Naive thymus-derived CD4-positive, alpha-beta T cell (primary cell): ENCODE measurements at regions of chr5 and their contacts with region 1.

Region 1: GRCh38 chr5:172133359-172134029 is 54.5 kb downstream of the STK10 start:
- DNase-seq: peak in 3 of 9 donors; percentile 11 to 32 (median 15)
- ATAC-seq: peak; percentile 87
- H3K4me3 ChIP-seq: no peak overlapping the region
- H3K4me3 Mint-ChIP-seq: peak overlapping the region; percentile 20 to 78 (median 65)
- H3K27ac ChIP-seq: peak overlapping the region; percentile 56
- H3K27ac Mint-ChIP-seq: peak overlapping the region; percentile 67 to 94 (median 85)
- H3K4me1 ChIP-seq: peaks cover 17 to 53% of the 10 kb centered on the region in 2 donors
- H3K4me1 Mint-ChIP-seq: peaks cover 49 to 81% (median 77%) of the 10 kb centered on the region in 7 donors
- H3K27me3 ChIP-seq: no peaks in the 10 kb centered on the region
- H3K27me3 Mint-ChIP-seq: no peaks in the 10 kb centered on the region

Region 2: DNA sequence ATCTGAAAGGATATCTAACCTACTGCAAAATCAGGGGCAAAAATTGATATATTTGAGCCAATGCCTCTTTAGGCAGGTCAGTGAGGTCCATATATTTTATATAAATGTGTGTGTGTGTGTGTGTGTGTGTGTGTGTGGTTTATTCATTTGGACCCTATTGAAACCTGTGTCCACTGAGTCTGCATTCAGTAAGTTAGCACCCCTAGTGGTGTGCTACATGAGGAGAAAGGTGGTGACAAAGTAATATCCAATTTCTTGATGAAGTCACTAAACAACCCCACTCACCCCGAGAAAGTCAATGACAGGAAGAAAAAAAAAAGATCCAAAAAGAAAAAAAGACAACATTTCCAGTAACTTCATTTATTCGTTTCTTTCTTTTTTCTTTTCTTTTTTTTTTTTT is 131.2 kb before region 1 on chr5:
- CTCF ChIA-PET with region 1: no interaction called
- POLR2A ChIA-PET with region 1: no interaction called
- intact Hi-C with region 1: no loop called
- DNase-seq: peak in 3 of 9 donors; percentile 12 to 15 (median 12)
- ATAC-seq: no peak
- H3K4me3 ChIP-seq: no peak overlapping the region
- H3K4me3 Mint-ChIP-seq: peak overlapping the region in 4 of 10 donors; percentile 9 to 47 (median 38)
- H3K27ac ChIP-seq: no peak overlapping the region
- H3K27ac Mint-ChIP-seq: peak overlapping the region in 1 of 9 donors; percentile 19
- H3K4me1 ChIP-seq: peaks cover 31 to 32% of the 10 kb centered on the region in 2 donors
- H3K4me1 Mint-ChIP-seq: peaks cover 48 to 86% (median 73%) of the 10 kb centered on the region in 7 donors
- H3K27me3 ChIP-seq: no peaks in the 10 kb centered on the region
- H3K27me3 Mint-ChIP-seq: no peaks in the 10 kb centered on the region

Region 3: GRCh38 chr5:172065501-172065990 is 67.9 kb before region 1 on chr5:
- CTCF ChIA-PET with region 1: no interaction called
- POLR2A ChIA-PET with region 1: no interaction called
- intact Hi-C with region 1: no loop called
- DNase-seq: no peak
- ATAC-seq: no peak
- H3K4me3 ChIP-seq: no peak overlapping the region
- H3K4me3 Mint-ChIP-seq: peak overlapping the region; percentile 7 to 86 (median 78)
- H3K27ac ChIP-seq: peak overlapping the region; percentile 82
- H3K27ac Mint-ChIP-seq: peak overlapping the region; percentile 87 to 99 (median 96)
- H3K4me1 ChIP-seq: peaks cover 36 to 48% of the 10 kb centered on the region in 2 donors
- H3K4me1 Mint-ChIP-seq: peaks cover 53 to 85% (median 75%) of the 10 kb centered on the region in 7 donors
- H3K27me3 ChIP-seq: no peaks in the 10 kb centered on the region
- H3K27me3 Mint-ChIP-seq: no peaks in the 10 kb centered on the region

Region 4: GRCh38 chr5:172106511-172107356 is 26.8 kb before region 1 on chr5:
- CTCF ChIA-PET with region 1: interaction called, 4 read pairs
- POLR2A ChIA-PET with region 1: interaction called, 4 read pairs
- intact Hi-C with region 1: loop called in 1 of 2 experiments (anchors 1 kb)
- DNase-seq: peak; percentile 31 to 78 (median 59)
- ATAC-seq: peak; percentile 43
- H3K4me3 ChIP-seq: no peak overlapping the region
- H3K4me3 Mint-ChIP-seq: peak overlapping the region in 8 of 10 donors; percentile 20 to 49 (median 39)
- H3K27ac ChIP-seq: peak overlapping the region; percentile 24
- H3K27ac Mint-ChIP-seq: peak overlapping the region; percentile 18 to 88 (median 81)
- H3K4me1 ChIP-seq: peaks cover 31 to 37% of the 10 kb centered on the region in 2 donors
- H3K4me1 Mint-ChIP-seq: peaks cover 23 to 61% (median 43%) of the 10 kb centered on the region in 7 donors
- H3K27me3 ChIP-seq: no peaks in the 10 kb centered on the region
- H3K27me3 Mint-ChIP-seq: no peaks in the 10 kb centered on the region

Region 5: DNA sequence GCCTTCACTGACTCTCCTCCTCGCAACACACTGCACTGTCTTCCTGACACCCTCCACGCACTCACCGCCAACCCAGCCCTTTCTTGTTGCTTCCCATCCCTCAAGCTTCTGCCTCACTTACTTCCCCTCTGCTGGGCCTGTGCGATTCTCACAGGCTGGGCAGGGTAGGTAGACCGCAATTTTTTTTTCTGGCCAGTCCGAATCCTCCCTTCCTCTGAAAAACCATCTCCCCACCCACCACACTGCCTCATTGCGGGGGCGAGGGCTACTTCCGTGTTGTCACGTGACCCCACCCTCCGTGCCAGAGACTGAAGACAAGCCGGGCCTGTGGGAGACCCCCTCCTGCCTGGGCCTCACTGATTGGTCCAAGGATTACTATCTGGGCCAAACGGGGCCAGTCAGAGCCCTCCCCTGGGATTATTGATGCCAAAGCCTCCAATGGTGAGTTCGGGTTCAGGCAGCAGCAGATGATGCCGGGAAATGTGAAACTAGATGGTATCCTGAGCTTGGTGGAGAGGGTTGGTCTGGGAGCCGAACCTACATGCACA is 18.5 kb before region 1 on chr5:
- CTCF ChIA-PET with region 1: interaction called, 4 read pairs
- POLR2A ChIA-PET with region 1: interaction called, 6 read pairs
- intact Hi-C with region 1: loop called (anchors 1 to 2 kb)
- DNase-seq: peak; percentile 35 to 78 (median 44)
- ATAC-seq: peak; percentile 70
- H3K4me3 ChIP-seq: peak overlapping the region; percentile 50
- H3K4me3 Mint-ChIP-seq: peak overlapping the region; percentile 54 to 90 (median 80)
- H3K27ac ChIP-seq: peak overlapping the region; percentile 70
- H3K27ac Mint-ChIP-seq: peak overlapping the region; percentile 75 to 98 (median 94)
- H3K4me1 ChIP-seq: peaks cover 67 to 80% of the 10 kb centered on the region in 2 donors
- H3K4me1 Mint-ChIP-seq: peaks cover 48 to 86% (median 72%) of the 10 kb centered on the region in 7 donors
- H3K27me3 ChIP-seq: no peaks in the 10 kb centered on the region
- H3K27me3 Mint-ChIP-seq: no peaks in the 10 kb centered on the region

Region 6: GRCh38 chr5:172162323-172162986 is 29.0 kb after region 1 on chr5:
- CTCF ChIA-PET with region 1: no interaction called
- POLR2A ChIA-PET with region 1: no interaction called
- intact Hi-C with region 1: loop called in 1 of 2 experiments (anchors 1 kb)
- DNase-seq: no peak
- ATAC-seq: no peak
- H3K4me3 ChIP-seq: no peak overlapping the region
- H3K4me3 Mint-ChIP-seq: peak overlapping the region in 4 of 10 donors; percentile 1 to 61 (median 10)
- H3K27ac ChIP-seq: peak overlapping the region; percentile 43
- H3K27ac Mint-ChIP-seq: peak overlapping the region; percentile 10 to 90 (median 75)
- H3K4me1 ChIP-seq: peaks cover 38 to 43% of the 10 kb centered on the region in 2 donors
- H3K4me1 Mint-ChIP-seq: peaks cover 40 to 87% (median 65%) of the 10 kb centered on the region in 7 donors
- H3K27me3 ChIP-seq: no peaks in the 10 kb centered on the region
- H3K27me3 Mint-ChIP-seq: no peaks in the 10 kb centered on the region